Dorsolateral prefrontal cortex (tissue), 120 donors: ENCODE measurements at regions of chr12 and their contacts with region 1.

Region 1: GRCh38 chr12:101407436-101408345 is at the start of gene ARL1:
- DNase-seq: peak; percentile 77 to 91 (median 83)
- H3K4me3 ChIP-seq: peak within 1 kb of the TSS; percentile 69 to 99 (median 92)
- H3K27ac ChIP-seq: peak within 1 kb of the TSS; percentile 68 to 98 (median 94)
- H3K27me3 ChIP-seq: no peaks in the 10 kb centered on the region
- CTCF ChIP-seq: peak in 31 of 56 donors; percentile 7 to 58 (median 33)
- total RNA-seq, gene ARL1: 52.3 to 116 (median 86.3) TPM

Region 2: GRCh38 chr12:101280006-101280505 is 127.6 kb before region 1 on chr12 and contains the start of gene UTP20:
- intact Hi-C with region 1: loop called in 1 of 2 experiments (anchors 5 kb)
- DNase-seq: peak; percentile 90 to 98 (median 96)
- H3K4me3 ChIP-seq: peak within 1 kb of the TSS; percentile 66 to 100 (median 91)
- H3K27ac ChIP-seq: peak within 1 kb of the TSS in 19 of 59 donors; percentile 1 to 76 (median 39)
- H3K27me3 ChIP-seq: no peaks in the 10 kb centered on the region
- CTCF ChIP-seq: peak in 27 of 56 donors; percentile 6 to 49 (median 21)
- total RNA-seq, gene UTP20: 5.7 to 13.6 (median 9.9) TPM